Posterior cingulate gyrus (tissue), 11 donors: ENCODE measurements at regions of chr2 and their contacts with region 1.

Region 1: DNA sequence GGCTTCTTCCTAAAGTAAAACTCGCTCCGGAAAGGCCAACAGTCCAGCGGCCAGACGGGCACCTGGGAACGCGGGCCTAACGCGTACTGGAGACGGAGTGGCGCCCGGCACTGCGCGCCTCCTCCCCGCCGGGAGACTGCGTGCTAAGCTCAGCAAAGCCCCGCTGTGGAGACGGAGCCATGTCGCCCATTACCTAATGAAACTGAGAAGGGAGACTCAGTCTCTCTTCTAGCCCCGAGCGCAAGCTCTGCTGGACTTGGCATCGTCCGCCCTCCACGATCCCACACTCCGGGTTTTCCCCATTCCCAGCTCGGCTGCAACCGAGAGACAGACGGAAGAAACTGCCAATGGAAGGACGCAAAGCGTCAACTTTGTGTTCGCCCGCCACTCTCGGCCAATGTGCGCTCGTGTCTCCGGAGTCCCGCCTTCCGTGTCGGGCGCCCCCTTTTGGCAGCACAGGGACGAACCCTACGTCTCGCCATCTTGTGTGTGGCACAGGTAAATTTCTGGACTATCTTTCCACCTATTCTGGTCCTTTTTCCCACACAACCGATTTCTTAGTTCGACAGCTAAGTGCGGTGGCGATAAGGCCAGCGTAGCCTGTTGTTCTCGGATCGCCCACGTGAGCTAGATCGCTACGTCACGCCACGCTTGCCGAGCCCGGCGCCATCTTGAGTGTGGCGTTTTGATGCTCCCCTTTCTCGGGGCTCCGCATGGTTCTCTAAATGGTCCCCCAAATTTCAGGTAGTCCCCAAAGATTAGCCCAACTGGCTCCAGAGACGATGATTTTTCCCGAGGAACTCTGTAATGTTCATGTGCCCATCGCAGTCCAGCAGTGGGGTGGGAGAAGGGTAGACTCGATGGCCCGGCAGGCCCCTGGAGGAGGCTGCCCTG is 1.3 kb upstream of the PTMA start:
- DNase-seq: peak; percentile 98 to 100 (median 99)

Region 2: DNA sequence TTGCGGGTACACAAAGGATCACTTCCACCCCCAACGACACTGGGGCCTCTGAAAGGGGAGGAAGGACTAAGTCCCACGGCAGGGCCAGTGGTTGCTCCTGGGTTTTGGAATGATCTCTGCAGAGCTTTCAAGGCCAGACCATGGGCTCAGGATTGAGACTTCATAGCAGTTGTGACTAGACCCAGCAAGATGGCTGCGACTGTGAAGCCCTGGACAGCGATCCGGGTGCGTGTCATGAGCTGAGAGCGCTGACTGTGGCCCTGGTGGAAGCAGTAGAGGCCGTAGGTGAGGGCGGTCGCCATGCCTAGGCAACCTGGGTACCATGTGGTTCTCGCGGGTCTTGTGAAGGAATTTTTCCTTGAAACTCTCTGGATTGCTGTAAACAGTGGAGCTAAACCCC is 270.0 kb before region 1 on chr2:
- intact Hi-C with region 1: no loop called
- DNase-seq: peak in 1 of 10 donors; percentile 70

Region 3: DNA sequence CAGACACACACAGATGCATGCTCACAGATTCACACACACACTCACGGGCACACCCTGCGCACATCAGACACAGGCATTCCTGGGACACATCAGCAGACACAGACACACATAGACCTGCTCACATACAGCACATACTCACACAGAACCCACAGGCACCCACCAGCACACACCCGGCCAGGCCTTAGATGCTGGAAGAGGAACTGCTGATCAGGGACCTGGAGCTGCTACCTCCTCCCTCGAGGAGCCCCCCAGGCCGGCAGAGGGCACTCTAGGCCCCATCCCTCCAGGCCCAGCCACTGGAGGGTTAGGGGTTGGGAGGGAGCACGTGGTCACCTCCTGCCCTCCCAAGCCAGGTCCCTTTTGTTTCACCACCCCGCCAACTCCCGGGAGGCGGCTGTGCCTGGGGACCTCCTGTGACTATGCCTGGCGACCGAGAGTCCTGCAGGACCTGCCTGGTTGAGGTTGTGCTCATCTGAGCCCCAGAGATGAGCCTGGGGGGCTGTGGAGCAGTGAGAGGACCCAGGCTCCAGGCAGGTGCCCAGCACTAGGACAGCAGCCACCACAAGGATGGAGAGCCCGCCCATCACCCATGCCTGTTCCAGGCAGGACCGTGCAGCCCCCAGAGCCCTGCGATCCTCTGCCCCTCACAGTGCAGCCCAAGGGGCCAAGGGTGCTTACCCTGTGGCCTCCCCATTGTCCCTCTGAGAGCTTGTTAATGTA is 19.7 kb before region 1 on chr2:
- intact Hi-C with region 1: loop called (anchors 1 kb)
- DNase-seq: peak; percentile 76 to 97 (median 84)

Region 4: GRCh38 chr2:231780909-231781797 is 74.2 kb after region 1 on chr2 and contains the start of gene PDE6D:
- intact Hi-C with region 1: loop called (anchors 5 kb)
- DNase-seq: peak; percentile 97 to 100 (median 99)

Region 5: GRCh38 chr2:232721882-232722281 is 1014.9 kb after region 1 on chr2:
- intact Hi-C with region 1: no loop called
- DNase-seq: no peak